ENCODE measurements at regions of chr3 and their contacts with region 1.

Region 1: DNA sequence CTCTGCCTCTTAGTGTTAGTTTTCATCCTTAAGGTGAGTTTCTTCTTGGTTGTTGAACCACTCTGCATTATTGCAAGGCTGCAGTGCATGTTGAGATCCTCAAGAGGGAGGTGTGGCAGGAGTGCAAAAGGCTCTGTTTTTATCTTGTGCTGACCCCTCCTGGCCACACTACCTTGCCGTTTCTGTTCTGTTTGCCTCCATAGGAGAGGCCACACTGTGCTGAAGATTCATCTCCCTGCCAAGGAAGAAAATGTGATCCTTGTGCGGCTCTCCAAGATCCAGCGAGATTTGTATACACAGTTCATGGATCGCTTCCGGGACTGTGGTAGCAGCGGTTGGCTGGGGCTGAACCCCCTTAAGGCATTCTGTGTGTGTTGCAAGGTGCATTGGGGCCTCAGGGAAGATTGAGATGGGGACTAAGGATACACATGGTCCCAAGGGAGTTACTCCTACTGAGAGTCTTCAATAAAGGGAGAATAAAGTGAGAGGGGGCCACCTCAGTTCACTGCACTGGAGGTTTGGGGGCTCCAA is 33.0 kb upstream of the TEX264 start:
- DNase-seq: peak; percentile 53
- H3K4me3 ChIP-seq: no peak overlapping the region
- H3K27ac ChIP-seq: no peak overlapping the region
- H3K4me1 ChIP-seq: peaks cover 4% of the 10 kb centered on the region
- H3K27me3 ChIP-seq: no peaks in the 10 kb centered on the region
- CTCF ChIP-seq: peak; percentile 90 to 95

Region 2: DNA sequence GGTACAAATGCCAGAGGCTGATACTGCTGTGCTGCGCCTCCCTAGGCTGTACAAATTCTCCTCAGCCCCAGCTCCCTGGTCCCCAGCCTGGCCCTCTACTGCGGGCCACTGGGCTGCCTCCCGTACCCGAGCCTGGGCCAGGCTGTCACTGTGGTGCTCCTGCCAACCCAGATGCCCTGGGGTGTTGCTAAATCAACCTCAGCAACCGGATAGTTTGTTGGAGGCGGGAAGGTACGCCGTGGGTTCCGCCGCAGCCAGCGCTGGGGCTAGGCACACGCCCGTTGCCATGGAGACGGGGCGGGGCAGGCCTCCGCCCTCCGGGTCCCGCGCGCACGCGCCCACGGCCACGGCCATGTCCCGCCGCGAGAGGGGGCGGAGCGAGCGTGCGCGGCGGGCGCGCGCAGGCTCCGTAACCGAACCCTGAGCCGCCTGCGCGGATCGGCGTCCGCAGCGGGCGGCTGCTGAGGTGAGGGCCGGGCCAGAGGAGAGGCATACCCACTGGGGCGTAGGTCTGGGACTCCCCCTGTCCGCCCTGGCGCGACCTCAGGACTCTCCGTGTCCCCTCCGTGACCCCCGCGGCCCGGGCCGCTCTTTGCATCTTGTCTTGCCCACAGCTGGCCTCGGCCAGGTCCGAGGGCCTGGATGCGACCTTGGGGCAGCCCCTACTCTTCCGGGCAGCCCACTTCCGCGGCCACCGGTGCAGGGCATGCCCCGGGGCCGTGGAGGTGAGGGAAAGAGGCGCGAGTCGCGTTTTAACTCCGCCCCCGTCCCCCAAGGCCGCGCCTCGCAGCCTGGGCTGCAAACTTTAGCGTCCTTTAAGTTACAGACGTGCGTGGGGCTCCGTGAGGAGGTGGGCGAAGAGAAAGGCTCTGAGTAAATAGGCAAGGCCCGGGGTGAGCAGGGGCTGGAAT is 33.1 kb after region 1 on chr3 and contains the start of gene TEX264:
- CTCF ChIA-PET with region 1: interaction called, 3 read pairs
- dilution Hi-C with region 1: no loop called
- in situ Hi-C with region 1: no loop called
- intact Hi-C with region 1: loop called (anchors 1 kb)
- DNase-seq: peak; percentile 80
- H3K4me3 ChIP-seq: peak within 1 kb of the TSS; percentile 77 to 79 (median 79)
- H3K27ac ChIP-seq: peak within 1 kb of the TSS; percentile 75
- H3K4me1 ChIP-seq: peaks cover 61% of the 10 kb centered on the region
- H3K27me3 ChIP-seq: no peaks in the 10 kb centered on the region
- CTCF ChIP-seq: no peak
- total RNA-seq, gene TEX264: 36.0 to 49.7 TPM

Region 3: GRCh38 chr3:51682079-51682478 is 44.1 kb after region 1 on chr3:
- CTCF ChIA-PET with region 1: interaction called, 3 read pairs
- dilution Hi-C with region 1: no loop called
- in situ Hi-C with region 1: no loop called
- intact Hi-C with region 1: loop called (anchors 1 kb)
- DNase-seq: peak; percentile 84
- H3K4me3 ChIP-seq: no peak overlapping the region
- H3K27ac ChIP-seq: peak overlapping the region; percentile 4
- H3K4me1 ChIP-seq: peaks cover 64% of the 10 kb centered on the region
- H3K27me3 ChIP-seq: no peaks in the 10 kb centered on the region
- CTCF ChIP-seq: peak; percentile 92 to 98

Region 4: GRCh38 chr3:51691949-51692348 is 53.9 kb after region 1 on chr3:
- CTCF ChIA-PET with region 1: interaction called, 26 read pairs
- dilution Hi-C with region 1: loop called (anchors 5 kb)
- in situ Hi-C with region 1: no loop called
- intact Hi-C with region 1: no loop called
- DNase-seq: no peak
- H3K4me3 ChIP-seq: no peak overlapping the region
- H3K27ac ChIP-seq: no peak overlapping the region
- H3K4me1 ChIP-seq: peaks cover 9% of the 10 kb centered on the region
- H3K27me3 ChIP-seq: no peaks in the 10 kb centered on the region
- CTCF ChIP-seq: no peak

Region 5: DNA sequence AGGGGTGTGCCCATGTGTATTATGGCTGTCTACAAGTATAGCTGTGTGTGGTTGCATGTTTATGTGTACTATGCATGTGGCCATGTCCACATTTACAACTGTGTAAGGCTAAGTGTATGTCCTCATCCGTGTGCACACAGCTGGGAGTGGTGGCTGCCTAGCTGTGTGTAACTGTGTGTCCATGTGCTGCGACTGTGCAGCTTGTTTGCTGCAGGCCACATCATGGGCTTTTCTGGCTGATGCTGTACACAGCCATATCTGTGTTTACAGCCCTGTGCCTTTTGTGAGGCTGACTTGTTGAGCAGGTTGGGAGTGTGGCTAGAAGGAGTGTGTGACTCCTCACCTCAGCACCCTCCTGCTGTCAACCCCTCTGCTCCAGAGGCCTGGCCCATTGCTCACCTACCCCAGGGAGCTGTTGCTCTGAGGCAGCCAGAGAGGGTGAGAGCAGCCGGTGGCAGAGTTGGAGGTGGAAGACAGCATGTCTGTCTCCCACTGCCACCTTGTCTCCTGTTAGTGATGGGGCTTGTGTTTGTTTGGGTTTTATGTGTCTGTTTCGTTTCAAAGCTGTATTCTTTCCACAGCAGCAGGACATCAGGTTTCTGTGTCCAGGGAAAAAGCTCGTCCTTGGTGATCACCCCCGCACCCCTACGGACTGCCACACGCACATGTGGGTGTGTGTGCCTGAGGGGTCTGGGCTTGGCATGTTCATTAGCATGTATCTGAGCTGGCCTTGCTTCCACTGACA is 67.4 kb after region 1 on chr3:
- CTCF ChIA-PET with region 1: interaction called, 24 read pairs
- dilution Hi-C with region 1: no loop called
- in situ Hi-C with region 1: no loop called
- intact Hi-C with region 1: no loop called
- DNase-seq: no peak
- H3K4me3 ChIP-seq: no peak overlapping the region
- H3K27ac ChIP-seq: no peak overlapping the region
- H3K4me1 ChIP-seq: no peaks in the 10 kb centered on the region
- H3K27me3 ChIP-seq: no peaks in the 10 kb centered on the region
- CTCF ChIP-seq: no peak